Panc1 (cell line): ENCODE measurements at regions of chr6 and their contacts with region 1.

Region 1: DNA sequence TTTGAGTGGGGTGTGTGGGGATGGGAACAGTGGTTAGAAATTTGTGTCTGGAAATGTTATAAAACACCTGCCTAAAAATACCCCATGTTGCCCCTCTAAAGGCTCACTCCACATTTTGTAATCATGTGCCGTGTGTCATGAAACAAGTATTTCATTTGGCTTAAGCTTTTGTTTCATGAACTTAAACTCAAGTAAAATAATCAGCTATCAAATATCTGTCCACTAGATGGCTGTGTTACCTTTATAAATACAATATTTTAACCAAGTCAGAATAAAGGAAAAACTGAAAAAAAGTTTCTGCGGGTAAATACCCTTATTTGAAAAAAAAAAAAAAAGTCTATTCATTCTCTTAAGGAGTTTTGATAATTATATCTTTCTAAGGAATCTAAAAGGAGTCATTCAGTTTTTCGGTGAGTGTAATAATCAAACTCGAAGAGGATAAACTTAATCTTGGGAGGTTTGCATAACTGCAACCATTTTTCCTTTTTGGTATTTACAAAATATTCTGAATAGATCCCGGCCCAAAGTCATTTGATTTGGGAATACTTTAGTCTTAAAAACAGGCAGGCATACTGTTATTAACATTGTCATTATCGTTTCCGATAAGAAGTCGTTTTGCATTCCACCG is 29.9 kb upstream of the MTRF1L start:
- DNase-seq: no peak
- ATAC-seq: no peak; the same call in 1 of the 2 replicates
- H3K4me3 ChIP-seq: no peak overlapping the region
- H3K27ac ChIP-seq: no peak overlapping the region
- H3K4me1 ChIP-seq: no peaks in the 10 kb centered on the region; the same call in 1 of the 2 replicates
- H3K27me3 ChIP-seq: no peaks in the 10 kb centered on the region
- CTCF ChIP-seq: peak; percentile 56; the same call in 1 of the 2 replicates

Region 2: DNA sequence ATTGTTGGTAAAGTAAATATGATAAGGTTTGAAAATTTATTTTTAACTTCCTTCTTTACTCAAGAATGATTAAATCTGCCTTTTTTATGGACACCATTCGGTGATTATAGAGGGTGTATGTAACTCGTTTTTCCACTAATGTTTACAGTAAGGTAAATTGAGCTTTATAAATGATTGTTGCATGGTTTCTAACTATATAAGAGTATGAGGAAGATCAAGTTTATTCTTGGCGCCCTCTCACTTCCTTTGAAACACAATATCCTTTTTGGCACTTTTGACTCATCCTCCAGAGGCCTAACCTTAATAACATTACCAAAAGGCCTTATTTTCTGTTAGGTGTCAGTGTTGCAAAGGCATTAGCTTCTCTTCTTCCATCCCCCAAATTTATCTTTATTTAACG is 11.9 kb after region 1 on chr6:
- CTCF ChIA-PET with region 1: no interaction called
- POLR2A ChIA-PET with region 1: no interaction called
- in situ Hi-C with region 1: no loop called
- intact Hi-C with region 1: no loop called
- DNase-seq: no peak
- ATAC-seq: no peak
- H3K4me3 ChIP-seq: no peak overlapping the region
- H3K27ac ChIP-seq: no peak overlapping the region
- H3K4me1 ChIP-seq: no peaks in the 10 kb centered on the region
- H3K27me3 ChIP-seq: no peaks in the 10 kb centered on the region
- CTCF ChIP-seq: no peak

Region 3: GRCh38 chr6:153108315-153108714 is 75.9 kb after region 1 on chr6:
- CTCF ChIA-PET with region 1: interaction called, 6 read pairs
- POLR2A ChIA-PET with region 1: no interaction called
- in situ Hi-C with region 1: no loop called
- intact Hi-C with region 1: loop called (anchors 2 kb)
- DNase-seq: no peak
- ATAC-seq: peak; percentile 78; the same call in 1 of the 2 replicates
- H3K4me3 ChIP-seq: no peak overlapping the region
- H3K27ac ChIP-seq: no peak overlapping the region
- H3K4me1 ChIP-seq: no peaks in the 10 kb centered on the region
- H3K27me3 ChIP-seq: no peaks in the 10 kb centered on the region
- CTCF ChIP-seq: peak; percentile 61

Region 4: GRCh38 chr6:153312641-153313040 is 280.3 kb after region 1 on chr6:
- CTCF ChIA-PET with region 1: interaction called, 12 read pairs
- POLR2A ChIA-PET with region 1: no interaction called
- in situ Hi-C with region 1: no loop called
- intact Hi-C with region 1: loop called (anchors 5 kb)
- DNase-seq: peak; percentile 52
- ATAC-seq: peak; percentile 89
- H3K4me3 ChIP-seq: no peak overlapping the region
- H3K27ac ChIP-seq: no peak overlapping the region
- H3K4me1 ChIP-seq: no peaks in the 10 kb centered on the region
- H3K27me3 ChIP-seq: no peaks in the 10 kb centered on the region
- CTCF ChIP-seq: peak; percentile 82